PC-9 (cell line): ENCODE measurements at regions of chr1 and their contacts with region 1.

Region 1: DNA sequence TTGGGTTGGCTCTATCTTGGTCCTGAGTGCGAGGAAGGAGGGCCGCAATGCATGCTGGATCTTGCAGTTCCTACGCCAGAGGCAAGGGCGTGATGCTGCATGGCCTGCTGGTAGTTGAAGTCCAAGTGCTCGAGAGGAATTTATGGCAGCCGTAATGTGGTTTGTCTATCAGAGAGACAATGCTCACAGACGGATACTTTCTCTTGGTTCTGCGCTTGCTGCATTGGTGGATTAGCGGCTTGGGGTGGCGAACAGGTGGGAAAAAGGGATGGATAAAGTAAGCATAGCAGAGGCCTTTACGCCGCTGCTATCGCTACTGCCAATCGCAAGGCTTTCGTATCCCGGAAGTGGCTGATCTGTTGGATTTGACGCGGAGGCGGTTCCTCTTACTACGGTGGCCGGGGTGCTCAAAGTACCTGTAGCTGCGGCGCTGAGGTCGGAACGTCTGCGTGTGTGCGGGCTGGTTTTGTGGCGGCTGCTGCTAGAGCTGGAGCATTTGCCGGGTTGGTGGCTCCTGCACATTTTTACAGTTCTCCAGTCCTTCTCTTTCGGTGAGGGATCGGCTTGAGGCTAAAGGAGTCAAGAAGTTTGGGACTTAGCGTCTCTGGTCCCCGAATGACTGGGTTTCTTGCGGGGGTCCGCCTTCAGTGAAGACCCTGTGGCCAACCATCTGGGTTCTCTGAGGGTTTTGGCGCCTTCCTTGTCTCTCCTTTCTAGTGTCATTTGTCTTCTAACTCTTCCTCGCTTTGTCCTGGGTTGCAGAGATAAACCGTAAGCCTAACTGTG is at the start of gene ATG4C:
- DNase-seq: peak; percentile 93 to 95
- H3K4me3 ChIP-seq: peak within 1 kb of the TSS; percentile 86
- H3K27ac ChIP-seq: peak within 1 kb of the TSS; percentile 72
- H3K4me1 ChIP-seq: peaks cover 18% of the 10 kb centered on the region
- H3K27me3 ChIP-seq: 0 out of 2 replicates have a peak, but pooled peaks cover 7% of the 10 kb centered on the region
- CTCF ChIP-seq: no peak
- total RNA-seq, gene ATG4C: 7.5 and 13.8 TPM in 2 replicates

Region 2: GRCh38 chr1:62436466-62437256 is 347.3 kb before region 1 on chr1 and contains the start of gene USP1:
- CTCF ChIA-PET with region 1: no interaction called
- POLR2A ChIA-PET with region 1: no interaction called
- intact Hi-C with region 1: loop called (anchors 1 kb)
- DNase-seq: peak; percentile 99
- H3K4me3 ChIP-seq: peak within 1 kb of the TSS; percentile 100
- H3K27ac ChIP-seq: peak within 1 kb of the TSS; percentile 95
- H3K4me1 ChIP-seq: peaks cover 23% of the 10 kb centered on the region
- H3K27me3 ChIP-seq: no peaks in the 10 kb centered on the region
- CTCF ChIP-seq: no peak
- total RNA-seq, gene USP1: 42.1 and 50.3 TPM in 2 replicates

Region 3: GRCh38 chr1:62765981-62766380 is 17.9 kb before region 1 on chr1:
- CTCF ChIA-PET with region 1: no interaction called
- POLR2A ChIA-PET with region 1: no interaction called
- intact Hi-C with region 1: loop called (anchors 2 kb)
- DNase-seq: no peak
- H3K4me3 ChIP-seq: no peak overlapping the region
- H3K27ac ChIP-seq: no peak overlapping the region
- H3K4me1 ChIP-seq: peaks cover 2% of the 10 kb centered on the region
- H3K27me3 ChIP-seq: no peaks in the 10 kb centered on the region
- CTCF ChIP-seq: no peak

Region 4: DNA sequence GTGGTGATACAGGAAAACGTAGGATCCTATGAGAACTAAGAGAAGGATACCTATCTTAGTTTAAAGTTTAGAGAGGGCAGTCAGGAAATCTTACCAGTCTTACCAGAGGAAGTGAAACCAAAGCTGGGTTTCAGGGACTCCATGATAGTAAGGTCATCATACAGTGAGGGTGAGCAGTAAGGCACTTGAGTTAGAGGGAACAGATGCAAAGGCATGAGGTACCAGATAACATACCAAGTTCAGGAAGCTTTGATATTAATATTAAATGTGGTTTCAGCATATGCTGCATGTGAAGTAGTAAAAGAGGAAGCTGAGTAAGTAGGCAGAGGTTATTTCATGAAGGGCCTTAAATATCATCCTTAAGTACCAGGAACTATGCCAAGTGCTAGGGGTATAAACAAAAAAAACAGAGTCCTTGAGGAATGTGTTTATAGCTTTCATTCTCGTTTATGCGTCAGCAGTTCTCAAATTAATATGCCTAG is 16.9 kb after region 1 on chr1:
- CTCF ChIA-PET with region 1: no interaction called
- POLR2A ChIA-PET with region 1: no interaction called
- intact Hi-C with region 1: no loop called
- DNase-seq: no peak
- H3K4me3 ChIP-seq: no peak overlapping the region
- H3K27ac ChIP-seq: no peak overlapping the region
- H3K4me1 ChIP-seq: no peaks in the 10 kb centered on the region
- H3K27me3 ChIP-seq: no peaks in the 10 kb centered on the region
- CTCF ChIP-seq: no peak